ENCODE measurements at regions of chr14 and their contacts with region 1.

Region 1: DNA sequence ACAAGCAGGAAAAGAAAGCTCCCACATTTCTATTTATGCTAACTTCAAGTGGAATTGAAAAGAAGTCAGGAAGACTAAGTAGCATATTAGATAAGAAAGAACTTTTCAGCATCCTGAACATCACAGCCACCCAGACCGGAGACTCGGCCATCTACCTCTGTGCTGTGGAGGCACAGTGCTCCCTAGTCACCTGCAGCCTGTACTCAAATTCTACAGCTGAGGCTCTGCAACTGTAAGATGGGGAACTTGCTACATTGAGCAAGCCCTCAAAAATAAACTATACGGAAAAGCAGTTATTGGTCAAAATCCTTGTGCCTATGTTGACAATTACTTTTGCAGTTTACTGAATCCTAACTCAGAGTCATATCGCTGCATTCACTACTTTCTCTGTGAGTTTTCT is 361.9 kb downstream of the DAD1 start:
- DNase-seq: no peak
- ATAC-seq: no peak
- H3K4me3 ChIP-seq: no peak overlapping the region
- H3K27ac ChIP-seq: no peak overlapping the region
- H3K4me1 ChIP-seq: no peaks in the 10 kb centered on the region
- H3K27me3 ChIP-seq: peaks cover 2% of the 10 kb centered on the region; the same call in 1 of the 2 replicates
- CTCF ChIP-seq: no peak

Region 2: DNA sequence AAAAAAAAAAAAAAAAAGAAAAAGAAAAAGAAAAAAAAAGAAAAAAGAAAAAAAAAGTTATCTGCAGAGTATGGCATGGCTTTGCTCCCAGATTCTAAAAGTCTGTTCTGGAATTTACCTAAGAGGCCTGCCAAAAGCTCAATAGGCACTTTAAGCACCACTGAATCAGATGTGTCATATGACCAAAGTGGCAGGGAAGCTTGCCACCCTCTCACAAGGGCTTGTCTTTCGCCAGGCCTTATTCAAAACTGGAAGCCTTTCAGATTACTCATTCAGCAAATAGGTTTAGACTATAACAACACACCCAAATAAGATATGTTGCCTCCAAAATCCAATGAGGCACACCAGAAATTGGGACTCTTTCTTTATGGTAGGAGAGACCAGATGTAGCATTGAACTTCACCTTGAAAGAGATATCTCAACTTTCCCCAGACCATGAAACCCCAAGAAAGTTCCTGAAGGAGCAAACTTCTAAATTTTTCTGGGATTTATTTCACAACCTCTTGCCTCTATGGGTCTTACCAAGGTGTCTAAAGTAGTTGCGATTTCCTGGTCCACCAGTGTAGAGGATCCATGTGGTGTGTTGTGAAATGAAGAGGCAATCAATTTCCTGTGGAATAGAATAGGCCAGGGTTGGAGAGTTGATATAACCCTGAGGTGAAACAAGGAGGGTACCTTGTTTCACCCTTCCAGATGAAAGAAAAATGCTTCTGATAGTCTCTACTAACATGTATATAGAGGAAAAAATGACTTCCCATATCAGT is 143.2 kb after region 1 on chr14:
- CTCF ChIA-PET with region 1: interaction called, 10 read pairs
- POLR2A ChIA-PET with region 1: no interaction called
- in situ Hi-C with region 1: no loop called
- intact Hi-C with region 1: no loop called
- DNase-seq: no peak
- ATAC-seq: no peak
- H3K4me3 ChIP-seq: no peak overlapping the region
- H3K27ac ChIP-seq: no peak overlapping the region
- H3K4me1 ChIP-seq: no peaks in the 10 kb centered on the region
- H3K27me3 ChIP-seq: no peaks in the 10 kb centered on the region; the same call in 1 of the 2 replicates
- CTCF ChIP-seq: no peak